MCF 10A (cell line): ENCODE measurements at regions of chr19 and their contacts with region 1.

Region 1: GRCh38 chr19:42881229-42881628 is 1.7 kb upstream of the PSG1 start:
- DNase-seq: no peak
- H3K4me3 Mint-ChIP-seq: no peak overlapping the region
- H3K27ac Mint-ChIP-seq: no peak overlapping the region
- H3K4me1 Mint-ChIP-seq: peaks cover 4% of the 10 kb centered on the region
- H3K27me3 Mint-ChIP-seq: no peaks in the 10 kb centered on the region
- CTCF ChIP-seq: peak; percentile 60

Region 2: GRCh38 chr19:42601811-42602443 is 279.3 kb before region 1 on chr19:
- CTCF ChIA-PET with region 1: no interaction called
- POLR2A ChIA-PET with region 1: no interaction called
- intact Hi-C with region 1: no loop called
- DNase-seq: peak; percentile 60
- H3K4me3 Mint-ChIP-seq: no peak overlapping the region
- H3K27ac Mint-ChIP-seq: no peak overlapping the region
- H3K4me1 Mint-ChIP-seq: no peaks in the 10 kb centered on the region
- H3K27me3 Mint-ChIP-seq: peaks cover 60% of the 10 kb centered on the region
- CTCF ChIP-seq: no peak

Region 3: DNA sequence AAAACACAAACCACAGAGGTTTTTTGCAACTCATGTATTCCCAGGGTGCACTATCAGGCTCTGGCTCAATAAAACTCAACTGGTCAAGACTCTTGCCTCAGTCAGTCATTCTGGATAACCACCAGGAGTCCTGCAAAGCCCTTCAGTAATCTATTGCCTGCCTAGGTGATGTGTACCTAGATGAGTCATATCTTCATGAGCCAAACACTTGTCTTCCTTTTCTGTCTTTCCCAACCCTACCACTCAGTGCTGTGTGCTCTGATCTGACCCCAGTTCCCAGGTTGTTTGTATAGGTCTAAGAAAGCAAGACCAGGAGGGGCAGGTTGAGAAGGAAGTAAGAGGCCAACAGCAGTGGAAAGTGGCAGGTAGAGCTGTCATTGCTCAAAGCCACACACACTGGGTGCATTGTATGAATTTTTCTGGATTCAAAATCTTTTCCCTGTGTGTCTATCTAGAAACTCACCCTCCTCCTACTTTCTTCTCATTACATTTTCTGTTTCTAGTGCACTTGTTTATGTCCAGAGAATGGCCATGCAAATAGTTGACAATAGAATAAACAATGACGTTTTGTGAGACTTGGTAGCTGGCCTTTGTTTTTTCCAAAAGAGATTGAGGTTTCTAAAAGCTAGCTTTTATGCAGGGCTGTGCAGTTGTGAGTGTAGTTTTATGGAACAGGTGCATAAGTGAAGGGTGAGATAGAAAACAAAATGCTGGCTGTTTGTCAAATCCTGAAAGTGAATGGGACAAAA is 49.8 kb before region 1 on chr19:
- CTCF ChIA-PET with region 1: no interaction called
- POLR2A ChIA-PET with region 1: no interaction called
- intact Hi-C with region 1: loop called (anchors 10 kb)
- DNase-seq: peak; percentile 82
- H3K4me3 Mint-ChIP-seq: no peak overlapping the region
- H3K27ac Mint-ChIP-seq: peak overlapping the region; percentile 76
- H3K4me1 Mint-ChIP-seq: peaks cover 26% of the 10 kb centered on the region
- H3K27me3 Mint-ChIP-seq: no peaks in the 10 kb centered on the region
- CTCF ChIP-seq: peak; percentile 19

Region 4: GRCh38 chr19:42919511-42920021 is 38.3 kb after region 1 on chr19:
- CTCF ChIA-PET with region 1: interaction called, 29 read pairs
- POLR2A ChIA-PET with region 1: no interaction called
- intact Hi-C with region 1: no loop called
- DNase-seq: no peak
- H3K4me3 Mint-ChIP-seq: no peak overlapping the region
- H3K27ac Mint-ChIP-seq: no peak overlapping the region
- H3K4me1 Mint-ChIP-seq: no peaks in the 10 kb centered on the region
- H3K27me3 Mint-ChIP-seq: no peaks in the 10 kb centered on the region
- CTCF ChIP-seq: peak; percentile 23